ENCODE measurements at regions of chr3 and their contacts with region 1.

Region 1: GRCh38 chr3:71710906-71711494 is 14.2 kb downstream of the EIF4E3 start:
- DNase-seq: peak in 2 of 42 donors; percentile 19 to 49

Region 2: DNA sequence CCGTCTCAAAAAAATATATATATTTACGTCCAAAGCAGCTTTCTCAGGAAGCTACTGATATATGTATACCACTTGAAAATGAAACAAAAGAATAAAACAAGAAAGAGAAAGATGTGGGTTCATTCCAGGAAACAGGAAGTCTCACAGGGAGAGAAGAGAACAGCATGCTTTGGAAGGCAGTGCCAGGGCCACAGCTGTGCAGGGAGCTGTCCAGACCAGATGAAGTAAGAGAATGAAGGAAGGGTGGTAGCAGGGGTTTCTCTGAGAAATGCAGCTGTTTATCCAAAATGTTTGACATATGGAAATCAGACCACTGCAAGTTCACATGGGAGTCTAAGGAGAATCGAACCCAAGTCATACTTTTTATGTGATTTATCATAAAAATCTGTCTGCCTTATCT is 33.7 kb after region 1 on chr3:
- intact Hi-C with region 1: no loop called
- DNase-seq: no peak

Region 3: DNA sequence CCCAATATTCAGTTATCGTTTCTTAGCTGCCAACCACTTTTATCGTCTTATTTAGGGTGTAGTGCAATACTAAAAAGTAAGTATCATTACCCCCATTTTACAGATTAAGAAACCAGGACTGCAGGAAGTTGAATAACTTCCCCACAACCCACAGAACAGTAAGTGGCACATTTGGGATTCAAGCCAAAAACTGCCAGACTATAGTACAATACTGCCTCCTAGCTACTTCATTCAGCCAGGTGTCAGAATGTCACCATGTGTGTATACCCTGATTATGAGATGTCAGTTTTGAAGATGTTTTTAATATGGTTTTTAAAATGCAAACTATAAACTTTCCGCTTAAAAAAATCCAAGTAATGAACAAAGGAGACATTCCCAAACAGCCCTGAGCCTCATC is 148.1 kb after region 1 on chr3:
- intact Hi-C with region 1: loop called (anchors 10 kb)
- DNase-seq: peak in 14 of 42 donors; percentile 18 to 67 (median 40)

Region 4: GRCh38 chr3:71949442-71949841 is 238.4 kb after region 1 on chr3:
- intact Hi-C with region 1: no loop called
- DNase-seq: no peak